WTC11 (cell line): ENCODE measurements at regions of chr5 and their contacts with region 1.

Region 1: DNA sequence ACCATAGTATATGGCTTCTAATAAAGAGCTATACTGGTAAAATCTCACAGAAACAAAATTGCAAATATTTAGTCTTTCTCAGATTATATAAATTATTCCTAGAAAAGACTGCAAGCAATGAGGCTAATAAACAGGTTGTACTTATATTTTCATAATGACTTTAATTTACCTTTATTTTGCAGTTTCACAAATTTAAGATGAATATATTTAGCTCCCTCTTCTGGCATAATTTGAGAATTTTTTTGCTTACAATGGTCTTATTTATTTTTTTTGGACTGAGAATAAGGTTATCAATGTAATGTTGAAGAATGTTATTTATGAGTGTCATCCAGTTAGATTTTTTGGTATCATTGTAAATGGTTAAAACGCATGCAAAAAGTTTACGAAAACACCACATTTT is 56.7 kb downstream of the PIK3R1 start:
- DNase-seq: no peak
- ATAC-seq: no peak
- H3K4me3 Mint-ChIP-seq: no peak overlapping the region
- H3K27ac Mint-ChIP-seq: no peak overlapping the region
- H3K4me1 Mint-ChIP-seq: peaks cover 24% of the 10 kb centered on the region
- H3K27me3 Mint-ChIP-seq: no peaks in the 10 kb centered on the region
- CTCF ChIP-seq: no peak

Region 2: DNA sequence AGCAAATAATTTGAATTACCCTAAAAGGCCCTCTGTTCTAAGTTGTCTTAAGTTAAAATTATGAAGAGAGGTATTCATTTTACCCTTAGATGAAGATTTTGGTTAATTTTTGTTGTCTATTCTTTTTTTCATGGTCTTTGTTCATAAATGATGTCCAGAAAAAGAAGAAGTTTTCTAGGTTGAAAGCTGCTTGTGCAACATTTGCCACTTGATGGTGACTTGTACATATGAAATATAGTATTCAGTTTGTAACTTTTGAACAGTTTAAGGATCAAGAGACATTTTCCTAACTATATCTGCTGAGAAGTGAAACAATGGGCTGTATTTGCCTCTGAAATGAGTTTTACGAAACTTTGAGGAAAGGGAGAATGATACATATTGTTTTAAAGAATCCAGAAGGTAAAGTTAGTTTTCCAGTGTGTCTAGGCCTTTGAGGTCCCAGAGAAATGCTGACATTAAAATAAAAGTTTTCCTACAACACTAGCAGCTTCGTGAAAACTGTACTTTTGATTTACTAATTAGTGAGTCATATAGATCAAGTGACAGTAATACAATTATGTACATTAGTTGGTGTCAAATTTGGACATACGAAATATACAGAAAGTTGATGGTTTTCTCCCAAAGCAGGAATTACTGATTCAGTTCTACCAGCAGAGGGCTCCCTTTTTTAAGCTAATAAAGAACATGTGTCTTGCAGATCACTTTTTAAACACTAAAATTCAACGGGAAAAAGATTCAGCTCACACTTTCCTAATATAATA is 13.7 kb after region 1 on chr5:
- CTCF ChIA-PET with region 1: interaction called, 12 read pairs
- POLR2A ChIA-PET with region 1: no interaction called
- DNase-seq: no peak
- ATAC-seq: no peak
- H3K4me3 Mint-ChIP-seq: no peak overlapping the region
- H3K27ac Mint-ChIP-seq: no peak overlapping the region
- H3K4me1 Mint-ChIP-seq: peaks cover 53% of the 10 kb centered on the region
- H3K27me3 Mint-ChIP-seq: no peaks in the 10 kb centered on the region
- CTCF ChIP-seq: peak; percentile 56; the same call in 1 of the 2 replicates

Region 3: GRCh38 chr5:68419637-68420452 is 147.6 kb after region 1 on chr5:
- CTCF ChIA-PET with region 1: no interaction called
- POLR2A ChIA-PET with region 1: no interaction called
- DNase-seq: no peak
- ATAC-seq: no peak
- H3K4me3 Mint-ChIP-seq: no peak overlapping the region
- H3K27ac Mint-ChIP-seq: no peak overlapping the region
- H3K4me1 Mint-ChIP-seq: peaks cover 17% of the 10 kb centered on the region
- H3K27me3 Mint-ChIP-seq: no peaks in the 10 kb centered on the region
- CTCF ChIP-seq: no peak

Region 4: GRCh38 chr5:68711293-68712200 is 439.3 kb after region 1 on chr5:
- CTCF ChIA-PET with region 1: no interaction called
- POLR2A ChIA-PET with region 1: interaction called, 14 read pairs
- DNase-seq: no peak
- ATAC-seq: no peak
- H3K4me3 Mint-ChIP-seq: no peak overlapping the region
- H3K27ac Mint-ChIP-seq: no peak overlapping the region
- H3K4me1 Mint-ChIP-seq: peaks cover 6% of the 10 kb centered on the region; the same call in 1 of the 2 replicates
- H3K27me3 Mint-ChIP-seq: no peaks in the 10 kb centered on the region; the same call in 1 of the 2 replicates
- CTCF ChIP-seq: no peak